ENCODE measurements at regions of chr16 and their contacts with region 1.

Region 1: DNA sequence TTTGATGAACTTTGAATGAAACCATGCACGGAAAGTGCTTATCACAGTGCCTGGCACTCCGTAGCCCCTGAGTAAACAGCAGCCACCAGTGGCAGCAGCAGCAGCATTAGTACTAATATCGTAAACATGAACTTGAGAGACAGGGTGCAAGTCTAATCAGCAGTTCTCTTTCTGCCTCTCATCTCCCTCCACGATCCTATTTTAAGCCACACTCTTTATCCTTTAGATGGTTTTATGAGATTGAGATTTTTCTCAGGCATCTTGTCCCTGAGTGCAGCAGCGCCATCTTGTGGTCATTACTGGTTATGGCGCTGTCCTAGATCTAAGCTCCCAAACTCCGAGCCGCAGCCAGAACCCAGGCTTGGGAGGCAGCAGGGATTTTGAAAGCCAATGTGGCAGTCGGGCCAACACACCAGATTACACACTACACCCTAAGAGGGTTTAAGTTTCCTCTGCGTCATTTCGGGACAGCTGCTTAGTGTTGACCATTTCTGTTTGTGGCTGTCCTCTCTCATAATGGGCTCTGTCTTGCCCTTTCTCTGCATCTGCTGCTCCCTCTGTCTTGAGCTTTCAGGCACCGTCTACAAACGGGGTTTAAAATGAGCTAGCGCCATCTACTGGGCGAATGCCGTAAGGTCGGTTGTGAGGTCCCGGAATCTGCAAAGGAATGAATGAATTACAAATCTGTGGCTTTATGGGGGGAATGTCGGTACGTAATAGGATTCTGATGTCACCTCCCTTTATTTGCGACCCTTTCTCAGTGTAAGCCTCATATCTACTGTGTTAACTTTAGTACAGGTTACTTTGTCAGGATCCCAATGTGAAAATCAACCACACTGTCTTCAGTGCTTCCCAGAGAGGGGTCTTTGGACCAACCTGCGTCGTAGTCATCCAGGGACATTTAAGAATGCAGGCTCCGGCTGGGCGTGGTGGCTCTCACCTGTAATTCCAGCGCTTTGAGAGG is 64.5 kb downstream of the CYLD start:
- DNase-seq: peak; percentile 90
- ATAC-seq: peak; percentile 88
- H3K4me3 Mint-ChIP-seq: peak overlapping the region; percentile 61
- H3K27ac Mint-ChIP-seq: no peak overlapping the region
- H3K4me1 Mint-ChIP-seq: peaks cover 28% of the 10 kb centered on the region
- H3K27me3 Mint-ChIP-seq: no peaks in the 10 kb centered on the region
- CTCF ChIP-seq: peak; percentile 94

Region 2: DNA sequence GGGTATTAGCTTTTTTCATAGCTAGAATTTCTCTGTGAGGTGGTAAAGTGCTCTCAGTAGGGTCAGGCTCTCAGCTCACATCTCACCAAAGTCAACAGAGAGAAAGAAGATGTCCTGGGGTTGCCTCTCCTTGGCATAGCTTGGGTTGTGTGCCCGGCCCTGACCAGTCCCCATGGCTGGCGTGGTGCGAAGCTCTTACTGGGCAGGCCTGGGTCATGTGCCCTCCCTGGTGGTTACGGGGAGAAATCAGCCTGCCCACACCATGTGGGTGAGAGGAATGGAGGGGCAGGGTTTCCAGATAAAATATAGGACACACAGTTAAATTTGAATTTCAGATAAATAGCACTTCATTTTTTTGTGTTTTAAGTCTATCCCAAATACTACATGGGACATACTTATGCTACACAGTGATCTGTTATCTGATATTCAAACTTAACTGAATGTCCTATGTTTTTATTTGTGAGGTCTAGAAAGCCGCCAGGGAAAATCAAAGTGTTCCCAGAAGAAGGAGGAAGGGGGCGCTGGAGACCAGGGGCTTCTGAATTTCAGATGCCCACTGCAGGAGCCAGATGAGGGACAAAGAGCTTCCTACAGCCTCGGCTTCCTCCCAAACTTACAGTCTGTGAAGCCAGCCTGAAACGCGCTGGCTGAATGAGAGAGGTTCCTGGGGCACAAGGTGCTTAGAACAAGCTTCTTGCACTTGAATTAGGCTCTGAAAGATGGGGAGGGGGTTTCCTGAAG is 212.8 kb before region 1 on chr16:
- CTCF ChIA-PET with region 1: interaction called, 37 read pairs
- POLR2A ChIA-PET with region 1: no interaction called
- DNase-seq: peak; percentile 71
- ATAC-seq: peak; percentile 88
- H3K4me3 Mint-ChIP-seq: no peak overlapping the region
- H3K27ac Mint-ChIP-seq: peak overlapping the region; percentile 74; the same call in 1 of the 2 replicates
- H3K4me1 Mint-ChIP-seq: peaks cover 28% of the 10 kb centered on the region
- H3K27me3 Mint-ChIP-seq: no peaks in the 10 kb centered on the region
- CTCF ChIP-seq: 0 out of 2 replicates have a peak, but pooled peaks have one; percentile 19

Region 3: GRCh38 chr16:50665128-50665878 is 141.1 kb before region 1 on chr16:
- CTCF ChIA-PET with region 1: interaction called, 236 read pairs
- POLR2A ChIA-PET with region 1: no interaction called
- DNase-seq: peak; percentile 89
- ATAC-seq: peak; percentile 81
- H3K4me3 Mint-ChIP-seq: peak overlapping the region; percentile 70
- H3K27ac Mint-ChIP-seq: peak overlapping the region; percentile 50; the same call in 1 of the 2 replicates
- H3K4me1 Mint-ChIP-seq: peaks cover 16% of the 10 kb centered on the region
- H3K27me3 Mint-ChIP-seq: peaks cover 5% of the 10 kb centered on the region
- CTCF ChIP-seq: peak; percentile 86

Region 4: GRCh38 chr16:50719518-50720337 is 86.7 kb before region 1 on chr16:
- CTCF ChIA-PET with region 1: interaction called, 26 read pairs
- POLR2A ChIA-PET with region 1: no interaction called
- DNase-seq: peak; percentile 29
- ATAC-seq: peak; percentile 85
- H3K4me3 Mint-ChIP-seq: no peak overlapping the region
- H3K27ac Mint-ChIP-seq: peak overlapping the region; percentile 41; the same call in 1 of the 2 replicates
- H3K4me1 Mint-ChIP-seq: peaks cover 12% of the 10 kb centered on the region
- H3K27me3 Mint-ChIP-seq: no peaks in the 10 kb centered on the region
- CTCF ChIP-seq: 0 out of 2 replicates have a peak, but pooled peaks have one; percentile 15

Region 5: GRCh38 chr16:50781043-50781442 is 25.3 kb before region 1 on chr16:
- CTCF ChIA-PET with region 1: interaction called, 49 read pairs
- POLR2A ChIA-PET with region 1: no interaction called
- DNase-seq: peak; percentile 31
- ATAC-seq: peak; percentile 98
- H3K4me3 Mint-ChIP-seq: no peak overlapping the region
- H3K27ac Mint-ChIP-seq: peak overlapping the region; percentile 83
- H3K4me1 Mint-ChIP-seq: peaks cover 2% of the 10 kb centered on the region
- H3K27me3 Mint-ChIP-seq: no peaks in the 10 kb centered on the region
- CTCF ChIP-seq: peak; percentile 29; the same call in 1 of the 2 replicates

Region 6: GRCh38 chr16:50841081-50841886 is 34.9 kb after region 1 on chr16:
- CTCF ChIA-PET with region 1: interaction called, 17 read pairs
- POLR2A ChIA-PET with region 1: no interaction called
- DNase-seq: peak; percentile 66
- ATAC-seq: peak; percentile 79
- H3K4me3 Mint-ChIP-seq: peak overlapping the region; percentile 60
- H3K27ac Mint-ChIP-seq: no peak overlapping the region
- H3K4me1 Mint-ChIP-seq: peaks cover 27% of the 10 kb centered on the region
- H3K27me3 Mint-ChIP-seq: peaks cover 11% of the 10 kb centered on the region
- CTCF ChIP-seq: no peak

Measured in WTC11 (cell line).